ENCODE measurements at regions of chr3 and their contacts with region 1.

Region 1: DNA sequence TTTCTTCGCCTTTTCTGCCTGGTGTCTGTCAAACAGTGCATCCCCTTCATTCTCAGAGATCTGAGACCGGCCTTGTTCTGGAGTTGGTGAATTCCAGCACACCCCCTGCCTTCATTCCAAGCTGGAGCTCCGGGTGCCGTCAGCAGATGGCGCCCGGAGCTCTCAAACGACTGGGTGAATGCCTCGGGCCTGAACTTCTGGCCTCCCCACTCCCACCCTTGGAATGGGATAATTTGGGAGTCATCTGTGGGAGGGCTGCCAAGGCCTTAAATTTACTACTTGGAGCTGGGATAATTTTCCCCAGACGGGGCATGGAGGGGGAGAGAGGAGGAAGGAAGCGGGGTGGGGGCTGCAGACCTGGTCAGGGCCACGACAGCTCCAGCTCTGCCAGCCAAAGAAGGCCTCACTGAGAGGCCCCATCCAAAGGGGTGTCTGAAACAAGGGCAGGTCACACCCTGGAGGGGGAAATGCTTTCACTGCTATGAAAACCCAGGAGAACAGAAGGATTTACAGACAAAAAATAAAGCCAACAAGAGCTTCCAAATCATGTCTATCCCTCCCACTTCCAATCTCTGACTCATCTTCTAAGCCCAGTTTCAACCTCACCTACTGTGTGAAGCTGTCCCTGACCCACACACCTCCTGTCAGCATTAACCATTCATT is 187.9 kb downstream of the OPA1 start:
- DNase-seq: peak; percentile 77
- H3K4me3 ChIP-seq: no peak overlapping the region
- H3K27ac ChIP-seq: no peak overlapping the region
- H3K4me1 ChIP-seq: no peaks in the 10 kb centered on the region
- H3K27me3 ChIP-seq: no peaks in the 10 kb centered on the region
- CTCF ChIP-seq: peak; percentile 57 to 63 (median 59)
- POLR2A ChIP-seq: no peak

Region 2: GRCh38 chr3:194141415-194142155 is 360.6 kb after region 1 on chr3:
- intact Hi-C with region 1: loop called (anchors 5 kb)
- DNase-seq: peak; percentile 92
- H3K4me3 ChIP-seq: peak overlapping the region; percentile 37 to 42
- H3K27ac ChIP-seq: peak overlapping the region; percentile 75 to 84
- H3K4me1 ChIP-seq: peaks cover 36% of the 10 kb centered on the region
- H3K27me3 ChIP-seq: no peaks in the 10 kb centered on the region
- CTCF ChIP-seq: no peak
- POLR2A ChIP-seq: no peak

Region 3: DNA sequence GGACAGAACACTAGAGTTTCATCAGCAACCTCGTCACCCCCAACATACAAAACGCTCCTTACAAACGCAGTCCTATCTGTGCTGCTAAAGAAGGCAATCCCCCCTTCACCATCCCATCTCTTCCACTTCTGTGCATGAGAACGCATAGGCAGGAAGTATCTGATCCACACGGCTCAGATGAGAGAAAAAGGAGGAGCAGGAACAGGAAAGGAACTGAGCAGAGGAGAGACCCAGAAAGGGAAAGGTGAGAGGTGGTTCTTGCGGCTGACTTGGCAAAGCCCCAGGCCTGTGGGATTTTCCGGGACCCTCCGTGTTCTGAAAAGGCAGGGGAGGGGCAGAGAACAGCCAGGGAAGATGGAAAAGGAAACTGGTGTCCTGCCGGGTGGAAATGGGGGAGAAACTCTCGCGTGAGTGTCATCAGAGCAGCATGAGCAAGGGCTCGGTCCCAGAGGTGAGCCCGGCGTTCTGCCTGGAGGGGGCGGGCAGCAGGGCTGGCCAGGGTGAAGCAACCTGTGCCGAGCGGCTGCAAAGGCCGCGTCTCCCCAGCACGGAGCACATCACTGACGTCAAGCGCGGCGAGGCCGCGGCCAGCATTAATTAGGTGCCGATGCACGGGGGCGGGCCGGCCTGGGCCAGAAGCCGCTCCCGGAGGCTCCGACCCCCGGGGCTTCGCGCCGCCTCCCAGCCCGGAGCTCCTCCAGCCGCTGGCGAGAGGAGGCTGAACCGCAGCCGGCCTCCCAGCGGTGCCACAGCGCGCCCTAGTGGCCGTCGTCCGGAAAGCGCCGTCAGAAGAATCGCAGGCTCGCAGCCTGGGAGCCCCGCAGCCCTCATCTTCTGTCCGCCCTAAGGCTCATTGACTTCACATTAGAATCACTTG is 534.4 kb after region 1 on chr3:
- intact Hi-C with region 1: loop called (anchors 2 kb)
- DNase-seq: peak; percentile 85
- H3K4me3 ChIP-seq: peak overlapping the region; percentile 47 to 56
- H3K27ac ChIP-seq: peak overlapping the region in 1 of 2 donors; percentile 72
- H3K4me1 ChIP-seq: peaks cover 28% of the 10 kb centered on the region
- H3K27me3 ChIP-seq: no peaks in the 10 kb centered on the region
- CTCF ChIP-seq: peak; percentile 88 to 96 (median 93)
- POLR2A ChIP-seq: no peak

Measured in testis (tissue), 5 donors.